GM10248 (cell line): ENCODE measurements at regions of chr2 and their contacts with region 1.

Region 1: GRCh38 chr2:227460070-227460485 is 11.9 kb upstream of the AGFG1 start:
- DNase-seq: peak; percentile 45
- CTCF ChIP-seq: no peak

Region 2: GRCh38 chr2:227395556-227395955 is 64.5 kb before region 1 on chr2:
- CTCF ChIA-PET with region 1: no interaction called
- POLR2A ChIA-PET with region 1: no interaction called
- DNase-seq: no peak
- CTCF ChIP-seq: no peak

Region 3: GRCh38 chr2:227471924-227472264 is 11.8 kb after region 1 on chr2 and contains the start of gene AGFG1:
- CTCF ChIA-PET with region 1: interaction called, 11 read pairs
- POLR2A ChIA-PET with region 1: no interaction called
- DNase-seq: peak; percentile 88
- CTCF ChIP-seq: peak; percentile 99